Naive thymus-derived CD8-positive, alpha-beta T cell (primary cell): ENCODE measurements at regions of chr21 and their contacts with region 1.

Region 1: GRCh38 chr21:31161157-31161556 is 122.9 kb upstream of the KRTAP19-8 start:
- DNase-seq: no peak
- ATAC-seq: peak in 1 of 2 donors; percentile 26
- H3K4me3 Mint-ChIP-seq: peak overlapping the region in 9 of 10 donors; percentile 2 to 66 (median 34)
- H3K27ac Mint-ChIP-seq: peak overlapping the region; percentile 70 to 99 (median 91)
- H3K4me1 Mint-ChIP-seq: peaks cover 34 to 84% (median 75%) of the 10 kb centered on the region in 4 donors
- H3K27me3 Mint-ChIP-seq: no peaks in the 10 kb centered on the region

Region 2: DNA sequence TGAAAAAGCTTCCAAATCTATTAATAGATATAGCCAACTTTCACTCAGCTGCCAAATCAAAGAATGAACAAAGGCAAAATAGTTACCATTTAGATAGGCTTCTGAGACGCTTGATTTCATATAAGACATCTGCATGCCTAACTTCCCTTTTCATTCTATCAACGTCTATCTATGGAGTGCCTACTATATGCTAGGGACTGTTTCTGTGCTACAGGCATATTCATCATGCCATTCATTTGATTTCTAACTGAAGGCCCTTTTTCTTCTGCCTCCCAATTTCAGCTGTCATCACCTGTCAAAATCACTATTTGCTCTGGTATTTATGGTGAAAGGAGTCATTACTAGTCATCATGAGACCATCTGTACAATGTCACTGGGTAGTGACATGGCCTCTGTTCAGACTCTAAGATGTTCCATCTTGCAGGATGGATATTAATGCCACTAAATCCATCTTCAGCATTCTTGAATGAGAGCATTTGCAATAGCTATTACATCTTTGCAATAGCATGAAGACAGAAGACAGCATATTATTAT is 769.6 kb before region 1 on chr21:
- POLR2A ChIA-PET with region 1: no interaction called
- DNase-seq: no peak
- ATAC-seq: no peak
- H3K4me3 Mint-ChIP-seq: no peak overlapping the region
- H3K27ac Mint-ChIP-seq: no peak overlapping the region
- H3K4me1 Mint-ChIP-seq: no peaks in the 10 kb centered on the region
- H3K27me3 Mint-ChIP-seq: peaks cover 2 to 17% (median 3%) of the 10 kb centered on the region in 5 donors

Region 3: DNA sequence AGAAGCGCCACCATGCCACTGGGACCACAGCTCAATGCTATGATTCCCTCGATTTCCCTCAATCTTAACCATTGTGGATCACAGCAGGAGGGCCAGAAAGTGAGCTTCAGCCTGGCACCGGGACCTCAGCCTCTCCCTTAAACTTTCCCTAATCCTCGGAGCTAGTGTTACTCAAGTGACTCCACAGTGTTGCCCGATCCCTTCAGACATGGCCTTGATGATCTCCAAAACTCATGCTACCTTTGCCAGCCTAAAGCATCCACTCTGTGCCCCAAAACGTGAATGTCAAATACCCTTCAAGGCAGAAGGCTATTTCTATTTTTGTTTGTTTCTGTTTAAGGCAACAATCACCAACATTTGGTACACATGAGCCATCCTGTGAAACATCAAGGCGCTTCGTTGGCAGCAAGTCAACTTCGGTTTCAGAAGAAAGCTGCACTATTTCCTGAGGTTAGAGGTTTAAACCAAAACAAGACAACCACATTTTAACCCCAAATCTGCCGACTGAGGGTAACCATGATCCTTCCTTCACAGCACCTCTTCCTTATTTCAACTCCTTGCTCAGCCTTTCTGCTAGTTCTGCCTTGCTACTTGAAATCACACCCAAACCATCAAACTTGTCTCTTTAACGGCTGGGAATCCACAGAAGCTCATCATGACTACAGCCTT is 28.4 kb before region 1 on chr21:
- POLR2A ChIA-PET with region 1: interaction called, 18 read pairs
- DNase-seq: peak; percentile 24 to 94 (median 85)
- ATAC-seq: peak; percentile 89 to 94
- H3K4me3 Mint-ChIP-seq: peak overlapping the region; percentile 57 to 94 (median 83)
- H3K27ac Mint-ChIP-seq: peak overlapping the region; percentile 42 to 91 (median 82)
- H3K4me1 Mint-ChIP-seq: peaks cover 24 to 58% (median 49%) of the 10 kb centered on the region in 4 donors
- H3K27me3 Mint-ChIP-seq: peaks cover 0 to 4% (median 0%) of the 10 kb centered on the region in 5 donors

Region 4: GRCh38 chr21:31143036-31143435 is 18.1 kb before region 1 on chr21:
- POLR2A ChIA-PET with region 1: interaction called, 11 read pairs
- DNase-seq: no peak
- ATAC-seq: no peak
- H3K4me3 Mint-ChIP-seq: no peak overlapping the region
- H3K27ac Mint-ChIP-seq: no peak overlapping the region
- H3K4me1 Mint-ChIP-seq: peaks cover 10 to 18% (median 13%) of the 10 kb centered on the region in 4 donors
- H3K27me3 Mint-ChIP-seq: no peaks in the 10 kb centered on the region

Region 5: DNA sequence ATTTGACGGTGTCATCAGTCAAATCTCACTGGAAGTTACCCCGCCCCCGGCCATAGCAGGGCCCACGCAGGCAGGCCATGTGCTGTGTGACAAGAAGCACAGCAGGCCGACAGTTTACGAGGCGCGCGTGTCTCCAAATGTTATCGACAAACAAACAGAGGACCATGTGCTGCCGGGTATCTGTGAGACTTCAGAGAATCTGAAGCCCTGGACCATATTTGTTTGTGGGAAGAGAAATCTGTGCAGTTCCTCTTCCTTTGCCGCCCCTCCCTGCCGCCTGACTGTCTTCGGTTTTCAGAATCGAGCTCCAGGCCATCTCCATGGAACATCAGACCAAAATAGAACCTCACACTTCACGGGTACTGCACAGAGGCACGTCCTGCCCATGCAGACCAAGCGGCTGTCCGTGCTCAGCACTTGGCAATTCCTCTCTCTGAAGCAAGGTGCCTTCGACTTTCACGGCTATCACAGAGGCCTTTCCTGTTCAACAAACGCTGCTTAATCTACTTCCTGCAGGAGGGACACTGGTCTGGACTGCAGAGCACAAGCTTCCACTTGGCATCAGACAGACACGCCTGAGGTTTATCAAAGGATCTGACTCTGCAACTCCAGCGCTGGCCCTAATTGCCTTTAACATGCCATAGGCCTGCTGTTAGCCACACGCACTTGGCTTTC is 12.9 kb after region 1 on chr21:
- POLR2A ChIA-PET with region 1: interaction called, 127 read pairs
- DNase-seq: no peak
- ATAC-seq: peak in 1 of 2 donors; percentile 17
- H3K4me3 Mint-ChIP-seq: peak overlapping the region in 9 of 10 donors; percentile 15 to 67 (median 43)
- H3K27ac Mint-ChIP-seq: peak overlapping the region in 6 of 10 donors; percentile 4 to 89 (median 73)
- H3K4me1 Mint-ChIP-seq: peaks cover 29 to 68% (median 49%) of the 10 kb centered on the region in 4 donors
- H3K27me3 Mint-ChIP-seq: no peaks in the 10 kb centered on the region

Region 6: DNA sequence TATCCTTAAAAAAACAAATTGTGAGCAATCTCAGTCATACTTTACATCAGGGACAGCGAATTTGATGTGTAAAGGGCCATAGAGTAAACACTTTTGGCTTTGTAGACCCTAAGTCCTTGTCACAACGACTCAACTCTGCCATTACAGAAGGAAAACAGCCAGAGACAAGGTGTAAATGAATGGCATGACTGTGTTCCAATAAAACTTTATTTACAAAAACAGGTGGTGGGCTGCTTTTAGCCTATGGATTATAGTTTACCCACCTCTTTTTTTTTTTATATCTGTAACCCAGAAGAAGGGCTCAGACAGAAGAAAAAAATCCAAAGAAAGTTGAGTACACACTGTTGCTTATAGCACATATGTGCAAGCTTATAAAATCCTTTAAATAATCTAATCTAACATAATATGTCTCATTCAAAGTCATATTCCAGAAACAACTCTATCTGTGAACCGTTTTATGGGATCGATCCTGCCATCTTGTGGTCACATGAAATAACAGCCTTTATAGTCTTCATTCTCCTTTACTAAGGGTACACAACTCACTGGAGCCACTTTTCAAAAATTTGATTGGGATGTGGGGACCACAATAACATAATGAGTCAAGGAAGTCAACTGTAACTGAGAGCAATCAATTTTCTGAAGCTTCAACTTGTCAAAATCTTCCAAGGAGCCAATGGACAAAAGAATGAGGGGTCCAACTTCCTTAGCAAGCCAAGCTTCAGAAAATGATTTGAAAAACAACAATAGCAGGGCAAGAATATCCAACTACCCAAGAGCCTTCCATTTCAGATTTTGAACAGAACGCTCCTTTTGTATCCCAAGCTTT is 19.3 kb after region 1 on chr21:
- POLR2A ChIA-PET with region 1: interaction called, 127 read pairs
- DNase-seq: peak in 4 of 10 donors; percentile 20 to 56 (median 44)
- ATAC-seq: no peak
- H3K4me3 Mint-ChIP-seq: peak overlapping the region; percentile 41 to 86 (median 80)
- H3K27ac Mint-ChIP-seq: peak overlapping the region; percentile 91 to 98 (median 96)
- H3K4me1 Mint-ChIP-seq: peaks cover 47 to 75% (median 71%) of the 10 kb centered on the region in 4 donors
- H3K27me3 Mint-ChIP-seq: no peaks in the 10 kb centered on the region

Region 7: GRCh38 chr21:31222142-31222541 is 61.0 kb after region 1 on chr21:
- POLR2A ChIA-PET with region 1: no interaction called
- DNase-seq: no peak
- ATAC-seq: no peak
- H3K4me3 Mint-ChIP-seq: no peak overlapping the region
- H3K27ac Mint-ChIP-seq: no peak overlapping the region
- H3K4me1 Mint-ChIP-seq: peaks cover 0 to 11% (median 0%) of the 10 kb centered on the region in 4 donors
- H3K27me3 Mint-ChIP-seq: no peaks in the 10 kb centered on the region

Region 8: GRCh38 chr21:31376301-31376700 is 215.1 kb after region 1 on chr21:
- POLR2A ChIA-PET with region 1: interaction called, 10 read pairs
- DNase-seq: no peak
- ATAC-seq: no peak
- H3K4me3 Mint-ChIP-seq: no peak overlapping the region
- H3K27ac Mint-ChIP-seq: peak overlapping the region in 1 of 10 donors; percentile 47
- H3K4me1 Mint-ChIP-seq: peaks cover 0 to 10% (median 5%) of the 10 kb centered on the region in 4 donors
- H3K27me3 Mint-ChIP-seq: no peaks in the 10 kb centered on the region